ENCODE measurements at regions of chr11 and their contacts with region 1.

Region 1: GRCh38 chr11:125123947-125124617 is 12.7 kb upstream of the TMEM218 start:
- DNase-seq: peak; percentile 74 to 77
- H3K4me3 ChIP-seq: peak overlapping the region; percentile 5
- H3K4me3 Mint-ChIP-seq: peak overlapping the region; percentile 55
- H3K27ac Mint-ChIP-seq: peak overlapping the region; percentile 76
- H3K4me1 ChIP-seq: peaks cover 28% of the 10 kb centered on the region
- H3K4me1 Mint-ChIP-seq: peaks cover 32% of the 10 kb centered on the region
- H3K27me3 ChIP-seq: no peaks in the 10 kb centered on the region
- H3K27me3 Mint-ChIP-seq: peaks cover 5% of the 10 kb centered on the region
- CTCF ChIP-seq: peak; percentile 67 to 80

Region 2: GRCh38 chr11:125141686-125142535 is 17.8 kb after region 1 on chr11:
- CTCF ChIA-PET with region 1: interaction called, 26 read pairs
- POLR2A ChIA-PET with region 1: interaction called, 3 read pairs
- intact Hi-C with region 1: no loop called
- DNase-seq: peak; percentile 56 to 82
- H3K4me3 ChIP-seq: no peak overlapping the region
- H3K4me3 Mint-ChIP-seq: no peak overlapping the region
- H3K27ac Mint-ChIP-seq: no peak overlapping the region
- H3K4me1 ChIP-seq: 0 out of 2 replicates have a peak, but pooled peaks cover 5% of the 10 kb centered on the region
- H3K4me1 Mint-ChIP-seq: no peaks in the 10 kb centered on the region
- H3K27me3 ChIP-seq: no peaks in the 10 kb centered on the region
- H3K27me3 Mint-ChIP-seq: peaks cover 7% of the 10 kb centered on the region
- CTCF ChIP-seq: peak; percentile 98 to 100

Region 3: DNA sequence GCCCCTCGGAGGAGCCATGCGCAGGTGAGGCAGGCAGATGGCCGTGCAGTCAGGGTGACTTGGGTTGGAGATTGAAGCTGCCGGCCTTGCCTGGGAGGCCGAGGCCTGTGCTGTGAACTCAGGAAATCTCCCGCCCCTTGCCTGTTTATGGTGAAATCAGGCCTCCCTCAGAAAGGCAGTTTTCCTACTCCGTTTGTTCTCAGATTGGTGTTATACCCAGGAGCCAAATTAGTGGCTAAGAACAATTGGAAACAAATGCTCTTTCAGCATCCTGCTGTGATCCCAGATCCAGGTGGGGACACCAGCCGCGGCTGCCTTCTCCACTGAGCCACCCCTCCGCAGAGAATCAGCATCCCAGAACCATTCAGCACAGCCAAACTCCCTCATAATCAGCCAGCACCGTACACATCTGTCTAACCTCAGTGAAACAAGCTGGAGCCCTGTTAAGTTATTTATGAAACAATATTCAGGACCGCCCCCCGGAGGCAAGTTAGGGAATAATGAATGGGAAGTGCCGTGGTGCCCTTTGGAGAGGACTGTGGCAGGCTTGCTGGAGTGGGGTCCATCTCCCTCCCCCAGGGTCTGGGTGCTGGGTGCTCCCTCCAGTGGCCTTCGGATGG is 100.4 kb after region 1 on chr11:
- CTCF ChIA-PET with region 1: no interaction called
- POLR2A ChIA-PET with region 1: no interaction called
- intact Hi-C with region 1: no loop called
- DNase-seq: peak in 1 of 2 experiments; percentile 46
- H3K4me3 ChIP-seq: no peak overlapping the region
- H3K4me3 Mint-ChIP-seq: no peak overlapping the region
- H3K27ac Mint-ChIP-seq: no peak overlapping the region
- H3K4me1 ChIP-seq: no peaks in the 10 kb centered on the region
- H3K4me1 Mint-ChIP-seq: no peaks in the 10 kb centered on the region
- H3K27me3 ChIP-seq: peaks cover 2% of the 10 kb centered on the region
- H3K27me3 Mint-ChIP-seq: peaks cover 27% of the 10 kb centered on the region
- CTCF ChIP-seq: peak in 1 of 2 experiments; percentile 38

Measured in Caco-2 (cell line).